ENCODE measurements at regions of chr14 and their contacts with region 1.

Region 1: DNA sequence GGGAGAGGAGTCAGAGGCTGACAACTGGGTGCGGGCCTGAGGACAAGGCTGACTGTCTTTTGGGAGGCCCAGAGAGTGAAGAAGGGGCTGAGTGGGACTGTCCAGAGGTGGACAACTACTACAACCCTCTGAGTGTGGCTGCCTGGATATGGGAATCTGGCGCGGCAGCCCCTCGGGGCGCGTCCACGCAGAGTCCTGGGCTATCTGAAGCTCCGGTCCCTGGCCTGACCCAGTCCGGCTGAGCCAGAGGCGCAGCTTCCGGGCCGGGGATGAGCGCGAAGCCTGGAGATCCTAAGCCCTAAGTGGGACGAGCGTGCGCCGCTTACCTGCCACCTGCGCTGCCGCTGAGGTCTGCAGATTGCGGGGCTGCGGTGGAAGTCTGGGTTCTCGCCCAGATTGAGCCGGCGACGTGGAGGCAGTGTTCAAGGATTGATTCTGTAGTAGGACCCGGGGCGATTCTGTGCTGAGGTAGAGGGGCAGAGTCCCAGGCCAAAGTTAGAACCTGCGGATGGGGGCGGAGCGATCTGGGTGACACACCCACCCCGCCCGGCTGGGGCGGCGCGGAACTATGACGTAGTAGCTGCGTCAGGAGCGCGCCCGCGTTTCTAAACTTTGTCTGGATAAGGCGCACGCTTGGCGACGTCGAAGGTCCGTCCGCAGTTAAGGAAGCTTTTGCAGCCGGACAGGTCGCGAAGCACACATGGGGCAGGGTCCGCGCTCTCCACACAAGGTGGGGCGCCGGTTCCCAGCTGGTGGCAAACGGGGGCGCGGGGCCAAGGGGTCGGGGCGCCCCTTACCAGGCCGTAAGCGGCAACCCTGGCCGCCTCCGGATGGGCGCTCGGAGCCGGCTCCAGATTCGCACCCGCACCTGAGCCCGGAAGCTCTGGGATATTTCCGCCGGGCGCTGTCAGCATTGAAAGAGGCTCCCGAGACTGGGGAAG is at the starts of genes DHRS1 and NOP9:
- DNase-seq: peak; percentile 94
- H3K4me3 Mint-ChIP-seq: peak within 1 kb of the TSS; percentile 87
- H3K27ac Mint-ChIP-seq: peak within 1 kb of the TSS; percentile 89
- H3K4me1 Mint-ChIP-seq: peaks cover 47% of the 10 kb centered on the region
- H3K27me3 Mint-ChIP-seq: no peaks in the 10 kb centered on the region
- total RNA-seq, gene DHRS1: 11.8 to 13.8 TPM
- total RNA-seq, gene NOP9: 24.8 to 26.4 TPM

Region 2: DNA sequence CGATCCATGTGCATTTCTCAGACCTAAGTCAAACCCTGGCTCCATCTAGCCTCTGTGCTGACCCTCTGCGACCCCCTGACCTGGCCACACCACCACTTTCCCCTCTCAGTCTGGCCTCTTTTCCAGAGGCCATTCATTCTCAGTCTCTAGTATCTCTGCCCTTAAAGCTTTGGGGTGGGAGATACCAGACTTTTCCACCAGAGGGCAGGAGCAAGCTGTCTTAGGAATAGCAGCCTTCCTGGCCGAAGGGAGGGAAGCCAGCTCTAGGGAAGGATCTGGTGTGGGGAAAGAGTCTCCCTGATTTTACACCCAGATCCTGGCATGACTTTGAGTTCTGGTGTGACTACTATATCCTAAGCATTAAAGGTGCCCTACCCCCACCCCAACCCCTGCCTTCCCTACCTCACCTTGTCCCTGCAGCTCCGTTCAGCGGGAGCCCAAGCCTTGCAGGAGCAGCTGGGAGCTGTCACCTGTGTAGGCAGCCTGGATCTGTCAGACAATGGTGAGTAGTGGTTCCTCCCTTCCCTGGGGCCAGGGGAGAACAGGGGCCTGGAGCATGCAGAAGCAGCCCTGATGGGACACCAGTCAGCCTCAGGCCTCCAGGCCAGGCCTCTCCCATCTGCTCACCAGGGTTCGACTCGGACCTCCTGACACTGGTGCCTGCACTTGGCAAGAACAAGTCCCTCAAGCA is 241.1 kb before region 1 on chr14:
- CTCF ChIA-PET with region 1: no interaction called
- intact Hi-C with region 1: loop called (anchors 1 kb)
- DNase-seq: peak; percentile 89
- H3K4me3 Mint-ChIP-seq: no peak overlapping the region
- H3K27ac Mint-ChIP-seq: peak overlapping the region; percentile 38
- H3K4me1 Mint-ChIP-seq: peaks cover 5% of the 10 kb centered on the region
- H3K27me3 Mint-ChIP-seq: peaks cover 2% of the 10 kb centered on the region

Region 3: GRCh38 chr14:24188251-24189058 is 111.1 kb before region 1 on chr14 and contains the start of gene IPO4:
- CTCF ChIA-PET with region 1: interaction called, 5 read pairs
- intact Hi-C with region 1: loop called (anchors 1 kb)
- DNase-seq: peak; percentile 97
- H3K4me3 Mint-ChIP-seq: peak within 1 kb of the TSS; percentile 85
- H3K27ac Mint-ChIP-seq: peak within 1 kb of the TSS; percentile 78
- H3K4me1 Mint-ChIP-seq: peaks cover 46% of the 10 kb centered on the region
- H3K27me3 Mint-ChIP-seq: no peaks in the 10 kb centered on the region
- total RNA-seq, gene IPO4: 64.2 to 74.5 TPM

Region 4: DNA sequence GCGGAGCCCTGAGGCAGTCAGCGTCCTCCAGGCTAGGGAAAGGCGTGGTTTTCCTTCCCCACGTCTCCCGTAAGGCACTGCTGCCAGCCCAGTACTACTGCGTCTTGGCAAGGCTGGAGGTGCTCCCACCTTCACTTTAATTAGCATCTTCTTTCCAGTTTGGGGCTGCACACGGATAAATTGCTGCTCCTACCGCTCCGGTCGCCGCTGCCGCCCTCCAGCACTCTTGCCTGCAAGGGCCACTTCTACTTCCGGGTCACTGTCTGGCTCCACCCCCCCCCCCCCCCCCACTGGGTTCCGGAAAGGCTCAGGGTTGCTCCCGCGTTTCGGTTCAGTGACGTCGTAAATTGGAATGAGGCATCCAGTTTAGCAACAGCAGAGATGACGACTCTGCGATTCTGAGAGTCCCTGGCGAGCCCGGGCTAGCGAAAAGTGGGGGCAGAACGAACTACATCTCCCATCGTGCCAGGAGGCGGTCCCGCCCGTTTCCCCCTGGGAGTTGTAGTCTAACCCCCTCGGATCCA is 67.3 kb before region 1 on chr14 and contains the start of gene NEDD8:
- CTCF ChIA-PET with region 1: interaction called, 17 read pairs
- intact Hi-C with region 1: loop called (anchors 1 kb)
- DNase-seq: peak; percentile 96
- H3K4me3 Mint-ChIP-seq: peak within 1 kb of the TSS; percentile 98
- H3K27ac Mint-ChIP-seq: peak within 1 kb of the TSS; percentile 97
- H3K4me1 Mint-ChIP-seq: peaks cover 52% of the 10 kb centered on the region
- H3K27me3 Mint-ChIP-seq: no peaks in the 10 kb centered on the region
- total RNA-seq, gene NEDD8: 172 to 196 TPM

Region 5: DNA sequence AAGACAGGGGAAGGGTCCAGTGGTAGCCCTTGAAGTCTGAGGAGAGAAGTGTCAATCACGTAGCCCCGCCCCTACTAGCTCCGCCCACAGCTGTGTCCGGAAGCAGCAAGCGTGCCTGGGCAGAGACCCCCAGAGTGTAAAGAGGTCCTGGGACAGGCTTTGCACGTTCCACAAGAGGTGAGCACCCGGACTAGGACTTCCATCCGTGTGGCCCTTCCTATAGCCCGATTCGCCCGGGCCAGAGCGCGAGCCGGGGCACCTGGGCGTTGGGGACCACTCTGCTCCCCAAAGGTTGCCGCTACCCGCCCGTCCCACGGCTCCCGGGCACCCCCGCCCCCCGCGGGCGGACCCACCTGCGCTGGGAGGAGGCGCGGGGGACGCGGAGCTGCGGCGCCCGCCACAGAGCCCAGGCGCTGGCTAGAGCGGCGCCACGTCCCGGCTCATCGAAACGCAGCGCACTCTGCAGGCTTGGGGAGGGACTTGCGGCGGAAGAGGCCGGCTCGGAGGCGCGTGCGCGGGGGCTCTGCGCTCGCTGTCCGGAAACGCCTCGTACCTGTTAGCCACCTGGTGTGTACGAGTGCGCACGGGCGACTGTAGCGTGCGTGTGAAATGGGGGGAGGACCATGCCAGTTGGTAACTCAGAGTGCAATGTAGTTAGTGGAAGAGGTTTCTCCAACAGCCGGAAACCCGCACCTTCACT is 28.2 kb before region 1 on chr14 and contains the start of gene RABGGTA:
- CTCF ChIA-PET with region 1: interaction called, 154 read pairs
- intact Hi-C with region 1: loop called (anchors 1 kb)
- DNase-seq: peak; percentile 94
- H3K4me3 Mint-ChIP-seq: peak within 1 kb of the TSS; percentile 78
- H3K27ac Mint-ChIP-seq: peak within 1 kb of the TSS; percentile 95
- H3K4me1 Mint-ChIP-seq: peaks cover 43% of the 10 kb centered on the region
- H3K27me3 Mint-ChIP-seq: no peaks in the 10 kb centered on the region
- total RNA-seq, gene RABGGTA: 74.9 to 76.2 TPM

Region 6: DNA sequence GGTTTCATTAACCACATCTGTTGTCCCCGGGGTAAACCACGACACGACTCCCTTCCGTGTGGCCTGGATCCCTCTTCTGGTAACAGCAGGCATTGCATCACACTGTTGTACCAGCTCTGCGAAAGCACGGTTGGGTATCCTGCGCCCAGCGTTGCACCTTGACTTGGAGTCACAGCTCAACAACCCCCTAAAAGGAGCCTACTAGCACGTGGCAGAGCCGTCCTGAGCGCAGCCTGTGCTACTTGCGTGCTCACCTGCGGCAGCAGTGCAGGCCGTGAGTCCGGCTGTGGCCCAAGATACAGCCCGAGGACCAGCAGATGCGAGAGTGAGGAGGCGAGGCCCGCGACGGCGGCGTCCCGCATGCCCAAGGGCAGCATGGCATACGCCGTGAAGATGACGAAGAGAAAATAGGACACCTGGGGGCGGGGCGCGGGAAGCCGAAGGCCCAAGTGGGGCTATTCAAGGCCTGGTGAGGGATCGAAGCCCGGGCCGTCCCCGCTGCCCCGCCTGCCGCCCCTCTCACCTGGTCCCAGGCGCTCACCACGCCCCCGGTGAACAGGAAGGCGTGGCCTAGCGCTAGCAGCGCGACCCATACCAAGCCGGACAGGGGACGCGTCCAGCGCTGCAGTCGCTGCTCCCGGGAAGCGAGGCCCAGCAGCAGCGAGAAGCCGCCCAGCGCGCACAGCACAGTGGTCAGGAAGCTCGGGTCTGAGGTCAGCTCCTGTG is 32.9 kb after region 1 on chr14:
- CTCF ChIA-PET with region 1: interaction called, 7 read pairs
- intact Hi-C with region 1: loop called (anchors 1 kb)
- DNase-seq: peak; percentile 91
- H3K4me3 Mint-ChIP-seq: peak overlapping the region; percentile 71
- H3K27ac Mint-ChIP-seq: no peak overlapping the region
- H3K4me1 Mint-ChIP-seq: peaks cover 28% of the 10 kb centered on the region
- H3K27me3 Mint-ChIP-seq: peaks cover 24% of the 10 kb centered on the region

Region 7: DNA sequence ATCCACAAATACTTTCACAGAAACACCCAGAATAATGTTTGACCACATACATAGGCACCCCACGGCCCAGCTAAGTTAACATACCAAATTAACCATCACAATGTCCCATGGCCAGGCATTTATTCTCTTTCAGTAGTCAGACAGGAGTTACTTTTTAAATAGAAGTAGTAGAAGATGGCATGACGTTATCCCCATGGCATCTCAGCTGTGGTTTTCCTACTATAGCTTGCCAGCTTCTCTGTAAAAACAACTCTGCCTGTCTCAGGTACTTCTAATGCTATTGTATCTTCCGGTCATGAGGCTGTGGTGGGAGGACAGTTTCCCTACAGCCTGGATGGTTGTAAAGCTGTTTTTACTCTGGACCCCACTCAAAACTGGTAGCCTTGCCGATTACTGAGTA is 257.2 kb after region 1 on chr14:
- CTCF ChIA-PET with region 1: no interaction called
- intact Hi-C with region 1: no loop called
- DNase-seq: no peak
- H3K4me3 Mint-ChIP-seq: no peak overlapping the region
- H3K27ac Mint-ChIP-seq: no peak overlapping the region
- H3K4me1 Mint-ChIP-seq: no peaks in the 10 kb centered on the region
- H3K27me3 Mint-ChIP-seq: peaks cover 5% of the 10 kb centered on the region

Measured in activated naive CD4-positive, alpha-beta T cell treated with anti-CD3 and anti-CD28 coated beads for 36 hours (primary cell).